Heart right ventricle (tissue), 16 donors: ENCODE measurements at regions of chr2 and their contacts with region 1.

Region 1: DNA sequence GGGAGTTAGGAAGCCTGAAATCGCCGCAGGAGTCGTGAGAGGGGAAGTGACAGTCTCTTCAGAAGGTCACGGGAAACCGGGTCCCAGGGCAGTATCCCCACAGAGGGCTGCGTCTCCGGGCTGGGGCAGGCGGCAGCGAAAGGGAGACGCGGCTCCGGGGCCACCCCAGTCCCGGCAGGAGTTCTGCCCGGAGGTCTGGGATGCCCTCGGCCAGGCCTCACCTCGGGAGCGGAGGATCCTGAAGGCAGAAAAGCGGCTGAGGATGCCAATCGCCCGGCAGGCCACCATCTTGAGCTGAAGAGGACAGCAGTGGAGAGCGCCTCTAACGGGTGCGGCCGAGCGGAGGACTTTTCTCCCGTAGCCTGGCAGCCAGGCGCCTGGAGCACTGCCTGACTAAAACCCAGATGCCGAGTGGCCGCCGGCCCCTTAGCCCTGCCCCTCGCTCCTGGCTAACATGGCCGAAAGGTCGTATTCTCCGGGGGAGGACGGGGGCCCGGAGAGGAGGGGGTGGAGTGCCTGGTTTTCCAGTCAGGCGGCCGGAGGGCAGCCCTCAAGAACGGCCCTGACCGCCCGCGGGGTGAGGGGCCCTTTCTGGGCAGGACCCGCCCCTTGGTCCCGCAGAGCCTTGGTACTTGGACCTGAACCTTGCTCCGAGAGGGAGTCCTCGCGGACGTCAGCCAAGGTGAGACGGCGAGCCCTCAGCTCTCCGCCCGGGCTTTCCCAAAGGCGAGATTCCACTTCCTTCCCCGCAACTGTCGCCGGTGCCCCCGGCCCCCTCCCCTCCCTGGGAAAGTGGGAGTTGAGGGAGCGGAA is at the starts of genes HADHA and HADHB:
- DNase-seq: peak; percentile 90
- ATAC-seq: peak; percentile 92 to 97 (median 95)
- H3K4me3 ChIP-seq: peak within 1 kb of the TSS; percentile 58 to 97 (median 82)
- H3K27ac ChIP-seq: peak within 1 kb of the TSS; percentile 93 to 99 (median 98)
- H3K4me1 ChIP-seq: peaks cover 4 to 79% (median 67%) of the 10 kb centered on the region in 9 donors
- H3K27me3 ChIP-seq: no peaks in the 10 kb centered on the region
- CTCF ChIP-seq: peak in 5 of 9 donors; percentile 8 to 52 (median 47)
- total RNA-seq, gene HADHA: 298 to 686 (median 410) TPM
- total RNA-seq, gene HADHB: 740 to 1,542 (median 874) TPM

Region 2: DNA sequence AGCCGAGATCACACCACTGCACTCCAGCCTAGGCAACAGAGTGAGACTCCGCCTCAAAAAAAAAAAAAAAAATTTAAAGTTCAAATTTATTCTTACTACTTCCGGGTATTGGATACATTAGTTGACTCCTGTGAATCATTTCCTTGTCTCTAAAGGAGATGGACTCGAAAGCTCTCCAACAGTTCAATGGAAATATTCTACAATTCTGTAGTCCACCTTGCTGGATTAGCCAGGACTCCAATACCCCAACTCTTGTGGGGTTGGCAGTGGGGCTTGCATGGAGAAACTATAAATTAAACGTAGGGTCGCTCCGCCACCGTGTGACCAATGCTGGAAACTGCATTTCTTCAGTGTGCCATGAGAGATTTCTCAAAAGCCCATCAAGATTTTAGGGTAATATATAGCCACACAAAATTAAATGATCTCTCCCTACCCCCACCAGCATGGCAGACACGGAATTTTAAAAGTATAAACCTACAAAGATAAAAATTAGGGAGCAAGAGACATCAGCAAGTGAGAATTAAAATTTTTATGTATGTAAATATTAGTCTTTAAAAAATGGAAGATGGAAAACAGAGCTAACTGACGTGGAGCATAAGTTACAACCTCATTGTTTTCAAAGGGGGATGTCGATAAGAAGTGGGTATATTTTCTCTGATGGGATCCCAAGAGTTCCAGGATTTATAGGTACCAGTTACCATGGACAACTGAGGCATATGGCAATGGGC is 99.4 kb before region 1 on chr2:
- intact Hi-C with region 1: no loop called
- DNase-seq: peak; percentile 40 to 43
- ATAC-seq: peak in 7 of 8 donors; percentile 65 to 79 (median 69)
- H3K4me3 ChIP-seq: no peak overlapping the region
- H3K27ac ChIP-seq: no peak overlapping the region
- H3K4me1 ChIP-seq: peaks cover 0 to 9% (median 0%) of the 10 kb centered on the region in 9 donors
- H3K27me3 ChIP-seq: peaks cover 0 to 10% (median 0%) of the 10 kb centered on the region in 7 donors
- CTCF ChIP-seq: peak; percentile 48 to 84 (median 75)

Region 3: DNA sequence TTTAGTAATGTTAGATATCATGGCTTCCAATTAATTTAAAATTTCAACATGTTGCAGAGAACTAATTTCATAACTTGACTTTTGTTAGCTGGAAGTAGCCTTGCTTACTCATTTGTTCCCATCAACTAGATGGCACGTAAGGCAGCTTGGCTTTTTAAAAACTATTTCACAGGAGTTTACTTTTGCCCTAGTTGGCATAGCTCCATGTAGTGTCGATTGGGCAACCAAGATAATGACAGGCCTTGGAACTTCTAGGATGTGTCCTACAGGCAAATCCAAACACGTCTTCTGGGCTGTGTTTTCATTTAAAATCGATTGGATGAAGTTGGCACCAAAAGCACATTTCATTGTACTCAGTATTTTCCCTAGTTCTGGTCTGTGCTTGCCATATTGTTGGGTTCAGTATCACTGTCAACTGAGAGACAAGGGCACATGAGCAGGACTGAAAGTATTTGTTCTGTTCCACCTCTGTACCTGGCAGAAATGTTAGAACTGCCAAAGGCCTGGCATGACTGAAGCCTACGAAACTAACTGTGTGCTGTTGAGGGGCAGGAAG is 29.6 kb after region 1 on chr2:
- intact Hi-C with region 1: loop called in 6 of 10 experiments (anchors 2 to 5 kb)
- DNase-seq: peak in 1 of 2 donors; percentile 66
- ATAC-seq: peak; percentile 60 to 97 (median 88)
- H3K4me3 ChIP-seq: no peak overlapping the region
- H3K27ac ChIP-seq: peak overlapping the region; percentile 32 to 82 (median 72)
- H3K4me1 ChIP-seq: peaks cover 0 to 62% (median 31%) of the 10 kb centered on the region in 9 donors
- H3K27me3 ChIP-seq: no peaks in the 10 kb centered on the region
- CTCF ChIP-seq: no peak

Region 4: DNA sequence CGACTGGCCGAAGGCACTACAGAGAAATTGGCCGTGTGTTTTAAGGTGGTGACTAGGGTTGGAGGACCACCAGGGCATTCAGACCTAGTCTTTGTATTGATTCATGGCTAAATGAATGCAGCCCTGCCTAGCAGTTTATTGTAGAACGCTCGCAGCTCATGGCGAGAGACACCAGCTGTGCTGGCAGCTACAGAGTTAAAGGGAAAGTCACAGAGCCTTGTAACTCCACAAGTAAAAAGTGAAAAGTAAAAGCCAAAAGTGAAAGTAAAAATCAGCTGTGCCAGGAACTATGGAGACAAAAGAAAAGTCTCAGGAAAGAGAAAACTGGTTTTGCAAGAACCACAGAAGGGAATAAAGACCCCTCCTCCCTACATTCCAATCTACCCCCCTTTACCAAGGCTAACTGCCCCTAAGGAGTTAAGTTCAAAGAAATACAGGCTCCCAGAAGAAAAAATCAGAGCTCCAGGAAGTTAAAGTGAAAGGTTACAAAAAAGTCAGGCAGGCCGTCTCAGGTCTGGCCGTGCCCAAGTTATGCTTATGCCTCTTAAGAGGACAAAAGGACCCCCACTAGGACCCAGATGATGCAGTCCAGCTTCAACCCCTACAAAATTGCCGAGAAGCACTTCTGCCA is 55.1 kb after region 1 on chr2:
- intact Hi-C with region 1: loop called in 1 of 10 experiments (anchors 10 kb)
- DNase-seq: peak in 1 of 2 donors; percentile 6
- ATAC-seq: peak; percentile 23 to 70 (median 63)
- H3K4me3 ChIP-seq: peak overlapping the region; percentile 26 to 71 (median 60)
- H3K27ac ChIP-seq: peak overlapping the region in 9 of 10 donors; percentile 20 to 85 (median 78)
- H3K4me1 ChIP-seq: peaks cover 0 to 27% (median 16%) of the 10 kb centered on the region in 9 donors
- H3K27me3 ChIP-seq: no peaks in the 10 kb centered on the region
- CTCF ChIP-seq: no peak